Sciatic nerve (tissue), 2 donors: ENCODE measurements at regions of chr10 and their contacts with region 1.

Region 1: GRCh38 chr10:119859420-119860258 is 13.0 kb downstream of the MCMBP start:
- DNase-seq: no peak
- ATAC-seq: no peak

Region 2: DNA sequence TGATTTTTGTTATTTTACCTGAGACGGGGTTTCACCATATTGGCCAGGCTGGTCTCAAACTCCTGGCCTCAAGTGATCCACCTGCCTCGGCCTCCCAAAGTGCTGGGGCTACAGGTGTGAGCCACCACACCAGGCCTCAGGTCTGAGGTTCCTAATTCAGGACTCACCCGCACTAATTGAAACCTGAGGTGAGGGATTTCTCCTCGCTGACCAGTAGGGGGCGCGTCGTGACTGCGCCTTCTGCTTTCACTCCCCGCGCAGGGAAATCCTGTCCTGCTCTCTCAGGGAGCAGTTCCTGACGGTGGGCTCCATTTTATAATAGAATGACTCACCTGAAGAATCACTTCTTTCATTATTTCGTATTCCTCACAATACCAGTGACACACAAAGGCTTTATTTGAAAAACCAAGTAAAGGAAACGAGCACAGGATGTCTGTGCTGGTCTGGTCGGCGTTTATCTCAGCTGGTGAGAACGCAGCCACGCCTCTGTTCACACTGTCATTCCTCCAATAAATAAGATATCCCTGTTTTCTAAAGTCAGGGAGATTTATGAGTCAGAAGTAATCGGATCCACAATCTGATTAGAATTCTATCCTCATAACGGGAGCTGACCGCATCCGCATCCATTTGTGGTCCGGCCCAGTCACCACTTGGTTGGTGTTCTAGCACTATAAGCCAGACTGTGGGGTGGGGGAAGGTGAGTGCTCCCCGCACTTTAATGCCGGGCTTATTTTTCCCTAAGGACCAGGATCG is 173.0 kb before region 1 on chr10:
- intact Hi-C with region 1: loop called (anchors 10 kb)
- DNase-seq: peak; percentile 91
- ATAC-seq: peak; percentile 91

Region 3: DNA sequence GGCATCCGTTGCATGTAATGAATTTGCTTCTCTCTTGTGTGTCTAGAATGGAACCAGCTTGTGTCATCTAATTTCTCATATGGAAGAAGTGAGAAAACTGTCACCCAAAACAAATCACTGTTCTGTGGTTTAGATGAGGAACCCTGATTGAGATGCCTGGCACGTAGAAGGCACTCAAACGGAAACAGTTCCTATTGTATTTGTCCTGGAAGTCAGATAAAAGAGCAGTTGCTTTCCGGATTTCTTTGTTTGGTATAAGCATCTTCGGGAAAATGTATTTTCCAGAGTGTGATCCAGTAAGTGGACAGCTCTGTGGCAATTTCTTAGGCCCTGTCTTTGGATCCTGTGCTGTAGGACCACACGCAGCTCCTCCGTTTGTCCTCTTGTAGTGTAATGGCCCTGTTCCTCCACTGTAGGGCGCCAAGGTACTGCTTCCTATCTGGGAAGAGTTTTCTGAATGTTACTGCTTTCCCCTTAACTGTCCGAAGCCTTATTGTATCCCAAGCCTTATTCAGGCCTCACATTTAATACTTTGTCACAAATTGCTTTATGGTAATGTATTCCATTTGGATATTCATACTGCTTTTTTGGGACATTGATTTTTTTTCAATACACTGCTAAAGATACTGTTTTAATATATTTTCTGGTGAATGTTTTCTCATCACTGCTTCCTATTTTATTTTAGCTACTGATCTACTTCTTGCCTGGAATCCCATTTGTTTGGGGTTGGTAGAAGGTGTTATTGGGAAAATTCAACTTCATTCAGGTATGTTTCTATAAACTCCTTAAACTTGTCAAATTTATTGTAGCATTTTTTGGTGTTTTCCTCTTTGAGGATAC is 109.0 kb before region 1 on chr10:
- intact Hi-C with region 1: loop called (anchors 10 kb)
- DNase-seq: peak; percentile 84
- ATAC-seq: peak; percentile 97